Activated CD4-positive, alpha-beta T cell treated with anti-CD3 and anti-CD28 coated beads, Interleukin-2, amount 10 ng/mL, durations not matched to agents 24 days and 14 days (primary cell): ENCODE measurements at regions of chr3 and their contacts with region 1.

Region 1: DNA sequence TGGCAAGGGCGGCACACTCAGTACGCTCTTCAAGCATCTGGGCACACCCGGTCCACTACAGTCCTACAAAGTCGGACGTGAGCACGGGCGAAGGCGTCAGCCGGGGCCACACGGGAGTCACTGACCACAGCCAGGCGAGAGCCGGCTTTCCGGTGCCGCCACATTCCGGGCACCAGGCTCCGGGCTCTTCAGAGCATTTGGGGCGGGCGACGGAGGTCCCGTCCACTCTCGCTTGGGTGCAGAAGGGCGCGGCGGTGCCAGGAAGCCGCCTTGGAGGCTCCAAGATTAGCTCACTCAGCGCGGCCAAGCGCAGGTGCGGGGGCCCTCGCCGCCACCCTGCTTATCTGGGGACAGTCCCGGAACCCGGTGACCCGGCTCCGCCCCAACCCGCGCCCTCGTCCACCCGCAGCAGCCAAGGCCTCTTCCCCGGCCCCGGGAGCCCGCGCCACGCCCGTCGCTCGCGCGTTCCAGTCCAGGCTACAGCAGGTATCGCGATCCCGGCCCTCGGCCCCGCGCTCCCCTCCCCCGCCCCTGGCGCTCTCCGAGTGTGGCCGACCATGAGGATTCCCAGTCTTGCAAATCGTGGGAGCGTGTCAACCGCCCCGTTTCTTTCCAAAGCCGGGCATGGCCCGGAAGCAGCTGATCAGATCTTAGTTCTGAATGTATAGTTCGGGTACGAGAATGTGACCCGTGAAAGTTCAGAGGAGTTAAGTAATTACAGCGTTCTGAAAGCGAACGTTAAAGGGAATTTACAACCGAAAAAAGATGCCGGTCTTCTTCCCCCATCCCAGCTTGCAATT is at the start of gene ADPRH:
- DNase-seq: peak; percentile 86
- H3K4me3 Mint-ChIP-seq: peak within 1 kb of the TSS; percentile 85
- H3K27ac Mint-ChIP-seq: peak within 1 kb of the TSS; percentile 93
- H3K4me1 Mint-ChIP-seq: peaks cover 25% of the 10 kb centered on the region
- H3K27me3 Mint-ChIP-seq: no peaks in the 10 kb centered on the region
- total RNA-seq, gene ADPRH: 3.6 and 4.2 TPM in 2 replicates

Region 2: GRCh38 chr3:119529883-119530282 is 49.7 kb before region 1 on chr3:
- intact Hi-C with region 1: no loop called
- DNase-seq: no peak
- H3K4me3 Mint-ChIP-seq: no peak overlapping the region
- H3K27ac Mint-ChIP-seq: no peak overlapping the region
- H3K4me1 Mint-ChIP-seq: peaks cover 5% of the 10 kb centered on the region
- H3K27me3 Mint-ChIP-seq: no peaks in the 10 kb centered on the region

Region 3: DNA sequence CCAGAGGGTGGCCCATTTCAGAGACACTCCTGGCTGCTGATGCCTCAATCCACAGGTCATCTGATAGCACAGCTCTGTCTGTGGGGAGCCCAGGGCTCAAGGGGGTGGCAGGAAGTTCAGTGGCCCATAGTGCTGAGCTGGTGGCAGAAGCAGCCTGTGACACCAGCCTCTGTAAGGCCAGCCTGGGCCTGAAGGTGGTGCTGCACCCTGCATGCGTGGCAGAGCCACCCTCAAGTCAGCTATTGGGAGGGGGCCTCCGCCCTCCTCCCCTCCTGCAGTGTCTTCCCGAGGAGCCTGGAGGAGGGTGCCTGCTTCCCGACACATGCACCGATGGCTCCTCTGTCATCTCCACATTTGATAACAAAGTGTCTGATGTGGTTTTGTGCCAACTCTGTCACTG is 21.2 kb after region 1 on chr3:
- intact Hi-C with region 1: loop called (anchors 2 kb)
- DNase-seq: peak; percentile 69
- H3K4me3 Mint-ChIP-seq: no peak overlapping the region
- H3K27ac Mint-ChIP-seq: peak overlapping the region; percentile 77
- H3K4me1 Mint-ChIP-seq: peaks cover 31% of the 10 kb centered on the region
- H3K27me3 Mint-ChIP-seq: no peaks in the 10 kb centered on the region

Region 4: GRCh38 chr3:119944091-119944490 is 364.5 kb after region 1 on chr3:
- intact Hi-C with region 1: no loop called
- DNase-seq: no peak
- H3K4me3 Mint-ChIP-seq: no peak overlapping the region
- H3K27ac Mint-ChIP-seq: no peak overlapping the region
- H3K4me1 Mint-ChIP-seq: peaks cover 17% of the 10 kb centered on the region
- H3K27me3 Mint-ChIP-seq: no peaks in the 10 kb centered on the region